PC-3 (cell line): ENCODE measurements at regions of chr9 and their contacts with region 1.

Region 1: GRCh38 chr9:27427273-27427645 is 96.8 kb upstream of the IFNK start:
- DNase-seq: peak; percentile 90
- ATAC-seq: peak; percentile 67
- H3K4me3 ChIP-seq: no peak overlapping the region
- H3K27ac ChIP-seq: peak overlapping the region; percentile 96
- H3K4me1 ChIP-seq: peaks cover 60% of the 10 kb centered on the region
- H3K27me3 ChIP-seq: no peaks in the 10 kb centered on the region
- CTCF ChIP-seq: no peak

Region 2: DNA sequence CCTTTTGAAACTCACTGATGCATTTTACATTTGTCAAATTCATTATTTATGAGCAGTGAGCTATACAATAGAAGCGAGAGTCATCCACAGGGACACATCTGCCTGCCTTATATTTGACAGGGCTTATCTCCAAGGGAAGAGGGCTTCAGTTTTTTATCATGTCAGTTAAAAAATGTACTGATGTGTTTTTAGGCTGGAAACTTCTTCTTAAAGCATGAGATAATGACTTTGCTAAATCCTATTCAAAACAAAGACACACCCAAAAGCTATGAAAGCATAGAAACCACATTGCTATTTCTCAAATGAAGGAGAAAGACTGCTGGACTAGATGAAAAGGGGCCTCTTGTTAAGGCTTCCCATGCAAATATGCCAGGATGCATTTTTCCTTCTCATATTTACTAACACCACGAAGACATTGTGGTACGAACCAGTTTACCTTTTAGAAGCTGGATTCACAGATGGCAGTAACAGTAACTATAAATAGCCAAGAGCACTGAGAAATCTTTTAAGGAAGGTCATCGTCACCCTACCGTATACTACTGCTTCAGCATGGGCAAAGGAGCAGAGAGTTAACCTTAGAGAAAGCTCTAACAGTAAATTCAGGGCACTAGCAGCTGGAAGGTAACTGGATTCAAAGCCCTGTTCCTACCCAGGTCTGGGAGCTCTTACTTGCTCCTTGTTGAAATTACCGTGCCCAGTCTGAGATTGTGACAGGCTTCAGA is 10.6 kb after region 1 on chr9:
- CTCF ChIA-PET with region 1: no interaction called
- POLR2A ChIA-PET with region 1: no interaction called
- intact Hi-C with region 1: loop called (anchors 1 kb)
- DNase-seq: no peak
- ATAC-seq: no peak
- H3K4me3 ChIP-seq: no peak overlapping the region
- H3K27ac ChIP-seq: no peak overlapping the region
- H3K4me1 ChIP-seq: 0 out of 2 replicates have a peak, but pooled peaks cover 7% of the 10 kb centered on the region
- H3K27me3 ChIP-seq: no peaks in the 10 kb centered on the region
- CTCF ChIP-seq: no peak

Region 3: GRCh38 chr9:27529316-27530278 is 102.3 kb after region 1 on chr9 and contains the start of gene MOB3B:
- CTCF ChIA-PET with region 1: interaction called, 3 read pairs
- POLR2A ChIA-PET with region 1: no interaction called
- intact Hi-C with region 1: loop called (anchors 5 kb)
- DNase-seq: peak; percentile 71
- ATAC-seq: peak; percentile 93
- H3K4me3 ChIP-seq: peak within 1 kb of the TSS; percentile 82
- H3K27ac ChIP-seq: no peak within 1 kb of the TSS
- H3K4me1 ChIP-seq: peaks cover 6% of the 10 kb centered on the region; the same call in 1 of the 2 replicates
- H3K27me3 ChIP-seq: no peaks in the 10 kb centered on the region
- CTCF ChIP-seq: peak; percentile 76
- total RNA-seq, gene MOB3B: 2.6 TPM in 2 replicates